ENCODE measurements at regions of chr20 and their contacts with region 1.

Region 1: DNA sequence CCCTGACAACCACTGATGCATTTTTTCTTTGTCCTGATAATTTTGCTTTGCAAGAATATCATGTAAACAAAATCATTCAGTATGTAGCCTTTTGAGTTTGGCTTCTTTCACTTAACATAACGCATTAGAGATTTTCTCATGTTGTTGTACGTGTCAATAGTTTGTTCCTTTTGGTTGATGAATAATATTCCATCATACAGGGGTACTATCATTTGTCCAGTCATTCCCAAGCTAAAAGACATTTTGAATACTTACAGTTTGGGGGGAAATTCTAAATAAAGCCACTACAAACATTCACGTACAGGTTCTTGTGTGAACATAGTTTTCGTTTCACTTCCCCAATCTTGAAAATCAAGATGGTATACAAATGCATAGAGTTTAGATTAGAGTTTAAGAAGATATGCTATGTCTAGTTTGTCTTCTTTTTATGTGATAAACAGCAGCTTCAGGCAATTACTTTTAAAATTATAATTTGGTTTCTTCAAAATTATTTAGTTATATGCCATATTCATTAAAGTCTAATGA is 5.2 kb downstream of the HAO1 start:
- DNase-seq: no peak
- H3K4me3 ChIP-seq: no peak overlapping the region
- H3K4me3 Mint-ChIP-seq: no peak overlapping the region
- H3K27ac Mint-ChIP-seq: no peak overlapping the region
- H3K4me1 ChIP-seq: no peaks in the 10 kb centered on the region
- H3K4me1 Mint-ChIP-seq: peaks cover 4% of the 10 kb centered on the region
- H3K27me3 ChIP-seq: no peaks in the 10 kb centered on the region
- H3K27me3 Mint-ChIP-seq: peaks cover 14% of the 10 kb centered on the region
- CTCF ChIP-seq: no peak

Region 2: DNA sequence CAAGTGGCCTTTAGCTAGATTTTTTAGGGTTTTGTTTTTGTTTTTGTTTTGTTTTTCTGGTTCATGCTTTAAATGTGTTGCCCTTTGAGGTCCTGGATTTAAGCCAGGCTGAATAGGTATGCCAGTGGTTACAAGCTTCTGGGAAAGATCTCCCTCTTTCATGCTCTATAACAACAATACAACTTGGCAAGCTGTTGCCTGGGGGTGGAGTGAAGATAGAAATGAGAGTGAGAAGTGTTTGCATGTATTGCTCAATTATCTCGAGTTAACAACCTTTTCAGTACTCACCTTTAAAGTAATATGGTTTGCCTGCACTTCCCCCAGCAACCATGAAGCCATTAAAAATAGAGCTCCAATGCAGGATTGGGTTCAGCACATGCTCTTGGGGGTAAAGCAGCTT is 24.4 kb after region 1 on chr20:
- CTCF ChIA-PET with region 1: interaction called, 10 read pairs
- POLR2A ChIA-PET with region 1: no interaction called
- intact Hi-C with region 1: no loop called
- DNase-seq: no peak
- H3K4me3 ChIP-seq: no peak overlapping the region
- H3K4me3 Mint-ChIP-seq: no peak overlapping the region
- H3K27ac Mint-ChIP-seq: no peak overlapping the region
- H3K4me1 ChIP-seq: no peaks in the 10 kb centered on the region
- H3K4me1 Mint-ChIP-seq: peaks cover 10% of the 10 kb centered on the region
- H3K27me3 ChIP-seq: no peaks in the 10 kb centered on the region
- H3K27me3 Mint-ChIP-seq: peaks cover 17% of the 10 kb centered on the region
- CTCF ChIP-seq: no peak

Region 3: DNA sequence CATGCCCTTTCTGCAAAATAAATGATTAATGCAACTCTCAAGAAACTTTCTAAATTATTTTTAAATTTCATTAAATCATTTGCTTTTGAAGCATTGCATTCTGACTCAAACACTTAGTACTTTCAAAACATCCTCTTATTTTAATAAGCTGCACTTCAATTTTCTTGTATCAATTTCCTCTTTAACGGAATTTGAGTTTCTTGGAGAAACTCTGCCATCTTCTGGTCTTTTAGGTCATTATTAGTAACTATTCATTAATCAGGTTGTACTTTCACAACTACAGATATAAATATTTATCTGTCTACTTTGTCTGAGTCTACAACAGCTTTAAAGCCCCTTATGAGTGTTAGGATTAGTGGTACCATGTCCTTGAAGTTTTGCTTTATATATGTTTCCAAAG is 54.3 kb after region 1 on chr20:
- CTCF ChIA-PET with region 1: interaction called, 7 read pairs
- POLR2A ChIA-PET with region 1: no interaction called
- intact Hi-C with region 1: loop called (anchors 1 kb)
- DNase-seq: no peak
- H3K4me3 ChIP-seq: no peak overlapping the region
- H3K4me3 Mint-ChIP-seq: no peak overlapping the region
- H3K27ac Mint-ChIP-seq: no peak overlapping the region
- H3K4me1 ChIP-seq: no peaks in the 10 kb centered on the region
- H3K4me1 Mint-ChIP-seq: no peaks in the 10 kb centered on the region
- H3K27me3 ChIP-seq: no peaks in the 10 kb centered on the region
- H3K27me3 Mint-ChIP-seq: no peaks in the 10 kb centered on the region
- CTCF ChIP-seq: peak in 1 of 2 experiments; percentile 12

Region 4: GRCh38 chr20:8007490-8007889 is 72.4 kb after region 1 on chr20:
- CTCF ChIA-PET with region 1: no interaction called
- POLR2A ChIA-PET with region 1: interaction called, 13 read pairs
- intact Hi-C with region 1: no loop called
- DNase-seq: no peak
- H3K4me3 ChIP-seq: no peak overlapping the region
- H3K4me3 Mint-ChIP-seq: no peak overlapping the region
- H3K27ac Mint-ChIP-seq: no peak overlapping the region
- H3K4me1 ChIP-seq: no peaks in the 10 kb centered on the region
- H3K4me1 Mint-ChIP-seq: no peaks in the 10 kb centered on the region
- H3K27me3 ChIP-seq: no peaks in the 10 kb centered on the region
- H3K27me3 Mint-ChIP-seq: no peaks in the 10 kb centered on the region
- CTCF ChIP-seq: no peak

Region 5: GRCh38 chr20:8124641-8125040 is 189.6 kb after region 1 on chr20:
- CTCF ChIA-PET with region 1: no interaction called
- POLR2A ChIA-PET with region 1: interaction called, 10 read pairs
- intact Hi-C with region 1: no loop called
- DNase-seq: no peak
- H3K4me3 ChIP-seq: no peak overlapping the region
- H3K4me3 Mint-ChIP-seq: no peak overlapping the region
- H3K27ac Mint-ChIP-seq: no peak overlapping the region
- H3K4me1 ChIP-seq: peaks cover 62% of the 10 kb centered on the region
- H3K4me1 Mint-ChIP-seq: peaks cover 31% of the 10 kb centered on the region
- H3K27me3 ChIP-seq: no peaks in the 10 kb centered on the region
- H3K27me3 Mint-ChIP-seq: no peaks in the 10 kb centered on the region
- CTCF ChIP-seq: no peak

Measured in Caco-2 (cell line).